Activated T-helper 1 cell treated with anti-CD3 and anti-CD28 coated beads, Interleukin-12 subunit alpha, Interleukin-12 subunit beta, Interleukin-2, Interleukin-4 antibody, amounts not matched to agents 30 ng/mL and 10 ng/mL and 1 ng/mL, durations not matched to agents 14 hours and 24 hours and 36 hours (primary cell): ENCODE measurements at regions of chr12 and their contacts with region 1.

Region 1: DNA sequence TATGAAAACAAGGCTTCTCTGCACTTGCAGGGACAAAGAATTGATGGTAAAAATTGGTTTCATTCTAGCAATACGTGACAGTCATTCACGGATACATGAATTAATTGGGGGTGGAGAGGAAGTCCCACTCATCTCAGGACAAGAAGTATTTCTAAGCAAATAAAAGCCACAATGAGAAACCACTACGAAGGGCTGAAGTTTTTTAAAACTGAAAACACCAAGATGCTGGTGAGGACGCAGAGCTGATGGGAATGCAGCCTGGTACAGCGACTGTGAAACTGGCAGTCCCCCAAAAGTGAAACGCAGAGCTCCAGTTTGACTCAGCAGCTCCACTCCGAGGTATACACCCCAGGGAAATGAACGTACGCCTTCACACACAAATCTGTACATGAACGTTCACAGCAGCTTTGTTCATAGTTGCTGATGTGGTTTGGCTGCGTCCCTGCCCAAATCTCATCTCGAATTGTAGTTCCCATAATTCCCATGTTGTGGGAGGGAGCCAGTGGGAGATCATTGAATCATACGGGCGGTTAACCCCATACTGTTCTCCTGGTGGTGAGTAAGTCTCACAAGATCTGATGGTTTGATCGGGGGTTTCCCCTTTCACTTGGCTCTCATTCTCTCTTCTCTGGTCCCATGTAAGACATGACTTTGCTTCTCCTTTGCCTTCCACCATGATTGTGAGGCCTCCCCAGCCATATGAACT is 89.0 kb downstream of the SCARB1 start:
- DNase-seq: peak; percentile 75
- H3K4me3 Mint-ChIP-seq: peak overlapping the region; percentile 53
- H3K27ac Mint-ChIP-seq: peak overlapping the region; percentile 69
- H3K4me1 Mint-ChIP-seq: peaks cover 30% of the 10 kb centered on the region
- H3K27me3 Mint-ChIP-seq: peaks cover 18% of the 10 kb centered on the region

Region 2: GRCh38 chr12:123681605-123682004 is 1093.0 kb before region 1 on chr12:
- intact Hi-C with region 1: no loop called
- DNase-seq: no peak
- H3K4me3 Mint-ChIP-seq: no peak overlapping the region
- H3K27ac Mint-ChIP-seq: no peak overlapping the region
- H3K4me1 Mint-ChIP-seq: no peaks in the 10 kb centered on the region
- H3K27me3 Mint-ChIP-seq: no peaks in the 10 kb centered on the region

Region 3: GRCh38 chr12:124453419-124454351 is 320.9 kb before region 1 on chr12:
- intact Hi-C with region 1: loop called (anchors 2 kb)
- DNase-seq: peak; percentile 74
- H3K4me3 Mint-ChIP-seq: peak overlapping the region; percentile 39
- H3K27ac Mint-ChIP-seq: peak overlapping the region; percentile 55
- H3K4me1 Mint-ChIP-seq: peaks cover 44% of the 10 kb centered on the region
- H3K27me3 Mint-ChIP-seq: peaks cover 2% of the 10 kb centered on the region

Region 4: GRCh38 chr12:124493809-124494750 is 280.5 kb before region 1 on chr12:
- intact Hi-C with region 1: loop called (anchors 1 kb)
- DNase-seq: peak; percentile 11
- H3K4me3 Mint-ChIP-seq: peak overlapping the region; percentile 39
- H3K27ac Mint-ChIP-seq: peak overlapping the region; percentile 63
- H3K4me1 Mint-ChIP-seq: peaks cover 27% of the 10 kb centered on the region
- H3K27me3 Mint-ChIP-seq: no peaks in the 10 kb centered on the region

Region 5: DNA sequence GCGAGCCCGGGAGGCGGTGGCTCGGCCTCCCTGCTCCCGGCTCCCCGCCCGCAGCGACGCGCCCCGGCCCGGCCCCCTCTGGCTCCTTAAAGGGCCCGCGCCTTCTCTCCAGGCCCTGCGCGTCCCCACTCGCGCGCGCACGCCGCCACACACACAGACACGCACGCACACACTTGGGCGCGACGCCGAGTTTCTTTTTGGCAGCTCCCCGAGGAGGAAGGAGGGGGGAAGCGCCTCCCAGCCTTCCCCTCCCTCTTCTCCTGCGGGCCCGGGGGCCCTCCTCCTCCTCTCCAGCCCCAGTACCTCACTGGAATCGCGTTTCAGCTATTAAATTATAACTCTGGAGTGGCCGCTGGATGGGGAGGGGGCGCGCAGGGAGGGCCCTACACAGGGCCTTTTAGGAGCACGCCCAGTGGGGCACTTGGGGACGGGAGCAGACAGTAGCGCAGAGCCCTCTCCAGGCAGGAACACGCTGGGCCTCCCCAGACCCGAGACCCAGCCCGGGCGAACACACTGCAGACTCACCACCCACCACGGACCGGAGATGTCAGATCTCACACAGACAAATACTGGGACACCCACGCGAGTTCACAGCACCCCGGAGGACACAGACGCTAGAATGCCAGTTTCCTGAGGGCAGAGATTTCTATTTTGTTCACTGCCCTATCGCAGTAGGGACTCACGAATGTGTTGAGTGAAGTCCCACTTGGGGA is 206.8 kb before region 1 on chr12:
- intact Hi-C with region 1: loop called (anchors 2 kb)
- DNase-seq: peak; percentile 82
- H3K4me3 Mint-ChIP-seq: peak overlapping the region; percentile 85
- H3K27ac Mint-ChIP-seq: peak overlapping the region; percentile 84
- H3K4me1 Mint-ChIP-seq: peaks cover 24% of the 10 kb centered on the region
- H3K27me3 Mint-ChIP-seq: peaks cover 3% of the 10 kb centered on the region

Region 6: DNA sequence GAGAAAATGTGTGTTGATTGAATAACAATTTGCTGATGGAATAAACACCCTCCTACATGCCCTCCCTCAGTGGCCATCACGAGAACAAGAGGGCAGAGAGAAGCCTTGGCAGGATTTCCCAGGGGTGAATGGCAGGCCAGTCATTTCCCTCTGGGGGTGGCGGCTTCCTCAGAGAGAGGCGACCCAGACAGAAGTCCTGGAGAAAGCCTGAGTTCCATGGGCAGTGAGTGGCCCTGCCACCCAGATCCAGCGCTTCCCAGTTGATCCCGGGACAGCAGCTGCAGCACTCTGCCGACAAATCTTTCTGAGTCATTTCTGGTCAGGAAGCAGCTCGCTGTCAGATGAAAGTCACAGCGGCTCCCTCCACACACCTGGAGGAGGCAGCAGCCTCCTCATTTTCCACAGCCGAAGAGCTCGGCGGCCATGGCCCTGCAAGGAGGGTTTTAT is 33.9 kb before region 1 on chr12:
- intact Hi-C with region 1: no loop called
- DNase-seq: no peak
- H3K4me3 Mint-ChIP-seq: peak overlapping the region; percentile 17
- H3K27ac Mint-ChIP-seq: no peak overlapping the region
- H3K4me1 Mint-ChIP-seq: peaks cover 16% of the 10 kb centered on the region
- H3K27me3 Mint-ChIP-seq: peaks cover 5% of the 10 kb centered on the region

Region 7: DNA sequence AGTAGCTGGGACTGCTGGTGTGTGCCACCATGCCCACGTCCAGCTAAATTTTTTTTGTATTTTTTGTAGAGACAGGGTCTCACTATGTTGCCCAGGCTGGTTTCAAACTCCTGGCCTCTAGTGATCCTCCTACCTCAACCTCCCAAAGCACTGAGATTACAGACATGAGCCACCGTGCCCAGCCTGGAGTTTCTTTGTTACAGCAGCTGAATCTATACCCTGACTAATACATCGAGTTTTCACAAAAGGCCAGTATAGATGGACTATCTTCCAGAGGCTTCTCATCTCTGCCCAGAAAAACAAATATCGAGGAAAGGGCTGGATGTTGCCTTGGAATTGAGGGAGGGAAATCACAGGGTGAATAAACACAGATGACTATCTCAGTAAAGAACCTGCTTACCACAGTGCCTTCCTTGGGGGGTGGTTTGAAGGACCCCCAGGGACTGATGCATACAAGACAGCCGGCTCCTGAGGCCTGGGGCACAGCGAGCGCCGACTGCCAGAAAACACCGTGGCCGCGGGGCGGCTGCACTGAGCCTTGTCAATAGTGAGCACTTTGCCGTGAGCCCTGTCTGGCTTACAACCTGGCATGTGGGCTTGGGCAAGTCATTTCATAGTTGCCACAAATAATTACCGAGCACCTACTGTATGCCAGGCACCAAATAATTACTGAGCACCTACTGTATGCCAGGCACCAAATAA is 22.8 kb before region 1 on chr12:
- intact Hi-C with region 1: no loop called
- DNase-seq: no peak
- H3K4me3 Mint-ChIP-seq: no peak overlapping the region
- H3K27ac Mint-ChIP-seq: no peak overlapping the region
- H3K4me1 Mint-ChIP-seq: peaks cover 6% of the 10 kb centered on the region
- H3K27me3 Mint-ChIP-seq: peaks cover 11% of the 10 kb centered on the region

Region 8: GRCh38 chr12:124761871-124762270 is 12.7 kb before region 1 on chr12:
- intact Hi-C with region 1: loop called (anchors 1 kb)
- DNase-seq: no peak
- H3K4me3 Mint-ChIP-seq: no peak overlapping the region
- H3K27ac Mint-ChIP-seq: peak overlapping the region; percentile 29
- H3K4me1 Mint-ChIP-seq: peaks cover 30% of the 10 kb centered on the region
- H3K27me3 Mint-ChIP-seq: peaks cover 2% of the 10 kb centered on the region

Region 9: GRCh38 chr12:124898200-124898922 is 123.7 kb after region 1 on chr12:
- intact Hi-C with region 1: loop called (anchors 2 kb)
- DNase-seq: peak; percentile 45
- H3K4me3 Mint-ChIP-seq: no peak overlapping the region
- H3K27ac Mint-ChIP-seq: no peak overlapping the region
- H3K4me1 Mint-ChIP-seq: peaks cover 21% of the 10 kb centered on the region
- H3K27me3 Mint-ChIP-seq: peaks cover 5% of the 10 kb centered on the region

Region 10: GRCh38 chr12:124917135-124917840 is 142.7 kb after region 1 on chr12:
- intact Hi-C with region 1: loop called (anchors 1 kb)
- DNase-seq: peak; percentile 92
- H3K4me3 Mint-ChIP-seq: peak overlapping the region; percentile 97
- H3K27ac Mint-ChIP-seq: peak overlapping the region; percentile 100
- H3K4me1 Mint-ChIP-seq: peaks cover 84% of the 10 kb centered on the region
- H3K27me3 Mint-ChIP-seq: no peaks in the 10 kb centered on the region

Region 11: DNA sequence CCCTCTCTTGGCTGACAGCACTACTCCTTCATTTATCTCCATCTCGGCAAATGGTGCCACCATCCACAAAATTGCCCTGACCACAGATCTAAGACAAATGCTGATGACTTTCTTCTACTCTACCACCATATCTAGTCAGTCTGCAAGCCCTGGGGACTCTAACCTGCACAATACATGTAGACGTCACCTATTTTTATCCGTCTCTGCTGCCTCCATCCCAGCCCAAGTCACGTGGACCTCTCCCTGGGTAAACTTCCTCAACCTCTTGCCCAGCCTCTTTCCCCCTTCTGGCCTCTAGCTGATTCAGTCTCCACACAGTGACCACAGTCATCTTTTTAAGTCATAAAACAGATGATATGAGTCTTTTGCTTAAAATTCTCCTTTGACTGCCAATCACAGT is 1493.6 kb after region 1 on chr12:
- intact Hi-C with region 1: no loop called
- DNase-seq: no peak
- H3K4me3 Mint-ChIP-seq: no peak overlapping the region
- H3K27ac Mint-ChIP-seq: no peak overlapping the region
- H3K4me1 Mint-ChIP-seq: no peaks in the 10 kb centered on the region
- H3K27me3 Mint-ChIP-seq: no peaks in the 10 kb centered on the region